ENCODE measurements at regions of chr1 and their contacts with region 1.

Region 1: DNA sequence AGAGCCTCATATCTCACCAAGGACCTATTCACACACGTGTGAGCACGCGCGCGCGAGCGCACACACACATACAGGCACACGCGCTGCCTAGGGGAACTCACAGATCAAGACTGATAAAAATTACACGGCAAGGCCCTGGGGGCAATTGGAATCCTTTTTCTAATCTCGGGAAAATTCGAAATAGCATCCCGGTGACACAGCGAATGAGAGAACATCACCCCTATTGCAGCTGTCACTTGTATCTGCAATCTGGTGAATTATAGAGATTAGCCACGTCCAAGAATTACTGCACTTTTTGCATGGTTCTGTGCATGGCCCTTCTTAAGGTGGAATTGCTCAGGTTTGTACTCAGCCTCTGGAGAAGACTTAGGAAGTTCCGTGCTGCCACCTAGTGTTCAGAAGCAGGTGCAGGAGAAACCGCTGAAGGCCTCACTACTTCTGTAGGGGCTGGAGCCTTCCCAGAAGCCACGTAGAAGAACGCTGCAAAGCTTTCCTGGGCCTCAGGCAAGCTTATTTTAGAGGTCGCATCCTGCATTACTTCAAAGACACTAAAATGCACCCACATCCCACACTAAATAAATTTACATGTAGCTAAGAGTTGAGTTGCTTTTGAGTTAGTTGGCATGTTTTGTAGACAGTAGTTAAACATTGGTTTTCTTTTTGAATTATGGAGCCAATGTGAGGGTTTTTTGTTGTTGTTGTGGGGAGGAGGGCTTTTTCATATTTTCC is 229.2 kb upstream of the CAMK1G start:
- DNase-seq: peak; percentile 84
- H3K4me3 ChIP-seq: no peak overlapping the region
- H3K27ac ChIP-seq: peak overlapping the region; percentile 80
- H3K4me1 ChIP-seq: peaks cover 35% of the 10 kb centered on the region
- H3K27me3 ChIP-seq: no peaks in the 10 kb centered on the region
- CTCF ChIP-seq: peak; percentile 90 to 94

Region 2: GRCh38 chr1:208245185-208245705 is 1109.0 kb before region 1 on chr1:
- CTCF ChIA-PET with region 1: no interaction called
- dilution Hi-C with region 1: no loop called
- in situ Hi-C with region 1: no loop called
- intact Hi-C with region 1: loop called (anchors 10 kb)
- DNase-seq: peak; percentile 75
- H3K4me3 ChIP-seq: peak overlapping the region; percentile 1 to 85 (median 24)
- H3K27ac ChIP-seq: no peak overlapping the region
- H3K4me1 ChIP-seq: peaks cover 31% of the 10 kb centered on the region
- H3K27me3 ChIP-seq: peaks cover 3% of the 10 kb centered on the region
- CTCF ChIP-seq: peak; percentile 64 to 74

Region 3: DNA sequence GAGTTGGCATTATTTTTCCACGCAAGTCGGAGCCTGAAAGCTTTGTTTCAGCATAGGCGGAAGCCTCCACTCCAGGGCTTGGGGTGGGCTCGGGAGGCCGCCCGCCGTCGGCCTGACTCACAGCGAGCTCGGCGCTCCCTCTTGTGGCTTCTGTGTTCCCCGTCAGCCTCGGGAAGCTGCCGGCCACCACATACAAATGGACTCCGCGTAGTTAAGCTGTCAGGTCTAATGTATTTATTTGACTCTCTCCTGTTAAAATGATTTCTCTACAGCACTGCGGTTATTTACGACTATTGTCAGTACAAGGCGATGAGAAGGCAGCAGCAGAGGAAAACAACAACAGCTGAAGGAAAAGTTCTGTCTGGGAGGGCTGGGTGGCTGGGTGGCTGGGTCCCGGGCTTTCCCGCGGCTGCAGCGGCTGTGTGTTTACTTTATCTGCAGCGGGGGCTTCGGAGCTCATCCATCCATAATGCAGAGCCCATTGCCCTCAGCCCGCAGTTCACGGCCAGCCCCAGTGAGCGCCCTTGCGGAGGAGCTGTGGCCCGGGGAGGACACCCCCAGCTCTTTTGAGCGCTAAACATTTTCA is 146.5 kb before region 1 on chr1:
- CTCF ChIA-PET with region 1: interaction called, 9 read pairs
- dilution Hi-C with region 1: no loop called
- in situ Hi-C with region 1: loop called in 1 of 2 experiments (anchors 10 kb)
- intact Hi-C with region 1: loop called (anchors 1 kb)
- DNase-seq: peak; percentile 44
- H3K4me3 ChIP-seq: peak overlapping the region; percentile 28 to 46 (median 36)
- H3K27ac ChIP-seq: no peak overlapping the region
- H3K4me1 ChIP-seq: peaks cover 12% of the 10 kb centered on the region
- H3K27me3 ChIP-seq: no peaks in the 10 kb centered on the region
- CTCF ChIP-seq: peak; percentile 59 to 92

Region 4: GRCh38 chr1:209383907-209384709 is 29.8 kb after region 1 on chr1:
- CTCF ChIA-PET with region 1: interaction called, 8 read pairs
- dilution Hi-C with region 1: no loop called
- in situ Hi-C with region 1: no loop called
- intact Hi-C with region 1: loop called (anchors 1 kb)
- DNase-seq: peak; percentile 84
- H3K4me3 ChIP-seq: peak overlapping the region; percentile 5 to 27 (median 11)
- H3K27ac ChIP-seq: peak overlapping the region; percentile 98
- H3K4me1 ChIP-seq: peaks cover 77% of the 10 kb centered on the region
- H3K27me3 ChIP-seq: no peaks in the 10 kb centered on the region
- CTCF ChIP-seq: no peak

Region 5: DNA sequence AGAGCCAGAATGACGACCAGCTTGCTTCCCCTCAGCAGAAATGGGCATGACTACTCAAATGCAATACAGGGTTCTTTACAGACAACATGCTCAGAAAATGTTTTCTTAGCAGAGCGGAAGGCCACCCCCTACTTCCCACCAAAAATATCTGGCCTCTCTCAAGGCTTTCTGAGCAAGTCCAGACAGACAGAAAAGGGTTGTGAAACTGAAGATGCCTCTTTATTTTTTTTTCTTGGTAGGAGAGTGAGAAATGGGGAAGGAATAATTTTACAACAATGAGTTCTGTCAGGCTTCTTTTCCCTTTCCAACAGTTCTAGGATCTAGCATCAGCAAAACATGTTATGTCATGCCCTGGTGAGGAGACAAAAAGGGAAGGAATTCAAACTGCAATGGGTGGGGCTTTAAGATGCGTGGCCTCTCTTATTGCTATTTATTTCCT is 57.2 kb after region 1 on chr1:
- CTCF ChIA-PET with region 1: no interaction called
- dilution Hi-C with region 1: no loop called
- in situ Hi-C with region 1: no loop called
- intact Hi-C with region 1: loop called (anchors 1 kb)
- DNase-seq: peak; percentile 97
- H3K4me3 ChIP-seq: peak overlapping the region in 1 of 3 experiments; percentile 12
- H3K27ac ChIP-seq: peak overlapping the region; percentile 100
- H3K4me1 ChIP-seq: peaks cover 78% of the 10 kb centered on the region
- H3K27me3 ChIP-seq: no peaks in the 10 kb centered on the region
- CTCF ChIP-seq: no peak

Region 6: GRCh38 chr1:209490013-209490412 is 135.7 kb after region 1 on chr1:
- CTCF ChIA-PET with region 1: no interaction called
- dilution Hi-C with region 1: no loop called
- in situ Hi-C with region 1: loop called in 1 of 2 experiments (anchors 10 kb)
- intact Hi-C with region 1: loop called (anchors 1 kb)
- DNase-seq: peak; percentile 26
- H3K4me3 ChIP-seq: no peak overlapping the region
- H3K27ac ChIP-seq: no peak overlapping the region
- H3K4me1 ChIP-seq: peaks cover 26% of the 10 kb centered on the region
- H3K27me3 ChIP-seq: no peaks in the 10 kb centered on the region
- CTCF ChIP-seq: peak; percentile 74 to 77

Measured in mammary epithelial cell (primary cell).